ENCODE measurements at regions of chr5 and their contacts with region 1.

Region 1: DNA sequence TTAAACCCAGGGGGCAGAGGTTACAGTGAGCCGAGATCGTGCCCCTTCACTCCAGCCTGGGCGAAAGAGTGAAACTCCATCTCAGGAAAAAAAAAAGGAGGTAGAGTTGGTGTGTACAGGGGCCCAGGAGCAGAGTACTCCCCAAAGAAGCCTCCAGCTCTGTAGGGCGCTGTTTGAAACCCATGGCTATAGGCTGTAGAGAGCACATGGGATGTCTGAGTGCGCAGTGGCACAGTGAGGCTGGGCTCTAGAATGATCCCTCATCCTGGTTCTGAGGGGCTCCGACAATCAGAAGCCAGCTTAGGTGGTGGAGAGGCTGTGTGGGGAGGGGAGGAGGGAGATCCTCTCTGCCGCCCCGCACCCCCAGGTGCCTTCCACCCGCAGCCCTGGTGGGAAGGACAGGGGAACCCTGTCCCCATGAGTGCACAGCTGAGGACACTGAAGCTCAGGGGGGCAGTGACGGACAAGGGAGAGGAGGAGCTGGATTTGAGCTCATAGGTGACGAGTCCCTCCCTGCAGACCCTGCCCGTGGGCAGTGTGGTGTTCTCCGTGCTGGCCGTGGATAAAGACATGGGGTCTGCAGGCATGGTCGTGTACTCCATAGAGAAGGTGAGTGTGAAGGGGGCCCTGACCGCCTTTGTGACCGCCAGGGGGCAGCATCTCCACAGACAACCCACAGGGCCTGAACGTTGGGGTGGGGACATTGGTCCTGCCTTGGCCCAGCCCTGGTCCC is 24.6 kb downstream of the CDHR2 start:
- DNase-seq: peak; percentile 8
- H3K4me3 ChIP-seq: no peak overlapping the region
- H3K27ac ChIP-seq: no peak overlapping the region
- H3K27me3 ChIP-seq: peaks cover 4% of the 10 kb centered on the region
- CTCF ChIP-seq: peak; percentile 82

Region 2: GRCh38 chr5:176415952-176416924 is 157.5 kb before region 1 on chr5 and contains the start of gene CLTB:
- CTCF ChIA-PET with region 1: interaction called, 10 read pairs
- POLR2A ChIA-PET with region 1: no interaction called
- DNase-seq: no peak
- H3K4me3 ChIP-seq: peak within 1 kb of the TSS; percentile 76
- H3K27ac ChIP-seq: peak within 1 kb of the TSS; percentile 39
- H3K27me3 ChIP-seq: no peaks in the 10 kb centered on the region
- CTCF ChIP-seq: peak; percentile 43
- polyA plus RNA-seq, gene CLTB: 66.2 and 67.3 TPM in 2 replicates

Region 3: GRCh38 chr5:176587398-176587797 is 13.7 kb after region 1 on chr5:
- CTCF ChIA-PET with region 1: interaction called, 21 read pairs
- POLR2A ChIA-PET with region 1: no interaction called
- DNase-seq: no peak
- H3K4me3 ChIP-seq: no peak overlapping the region
- H3K27ac ChIP-seq: no peak overlapping the region
- H3K27me3 ChIP-seq: no peaks in the 10 kb centered on the region
- CTCF ChIP-seq: no peak

Region 4: DNA sequence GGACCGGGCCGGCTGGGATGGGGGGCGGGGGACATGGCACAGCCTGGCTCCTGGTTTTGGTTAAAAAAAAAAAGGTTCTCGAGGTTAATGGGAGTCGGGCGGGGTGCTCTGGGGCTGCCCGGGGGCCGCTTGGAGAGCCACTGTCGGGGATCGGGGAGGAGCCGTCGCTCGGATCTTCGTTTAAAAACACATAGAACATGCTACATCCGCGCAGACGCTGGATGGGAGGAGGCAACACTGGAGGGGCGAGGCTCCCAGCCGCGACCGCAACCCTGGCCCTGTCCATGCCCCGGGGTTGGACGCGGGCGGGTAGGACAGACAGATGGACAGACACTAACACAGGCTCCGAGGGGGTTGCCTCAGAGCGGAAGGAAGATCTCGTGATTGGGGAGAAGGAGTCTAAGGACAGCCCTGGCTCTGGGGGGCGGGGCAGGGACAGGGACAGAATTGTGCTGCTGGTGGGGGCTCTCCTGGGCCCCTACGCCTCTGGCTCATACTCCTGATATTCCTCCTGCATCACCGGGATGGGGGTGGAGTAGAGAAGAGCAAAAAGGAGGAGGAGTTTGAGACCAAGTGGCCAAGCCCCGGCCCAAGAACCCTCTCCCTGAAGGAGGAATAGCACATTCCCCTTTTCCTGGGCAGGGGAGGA is 46.7 kb after region 1 on chr5:
- CTCF ChIA-PET with region 1: interaction called, 20 read pairs
- POLR2A ChIA-PET with region 1: interaction called, 3 read pairs
- DNase-seq: no peak
- H3K4me3 ChIP-seq: peak overlapping the region; percentile 25; the same call in 1 of the 2 replicates
- H3K27ac ChIP-seq: no peak overlapping the region
- H3K27me3 ChIP-seq: peaks cover 40% of the 10 kb centered on the region
- CTCF ChIP-seq: no peak

Region 5: DNA sequence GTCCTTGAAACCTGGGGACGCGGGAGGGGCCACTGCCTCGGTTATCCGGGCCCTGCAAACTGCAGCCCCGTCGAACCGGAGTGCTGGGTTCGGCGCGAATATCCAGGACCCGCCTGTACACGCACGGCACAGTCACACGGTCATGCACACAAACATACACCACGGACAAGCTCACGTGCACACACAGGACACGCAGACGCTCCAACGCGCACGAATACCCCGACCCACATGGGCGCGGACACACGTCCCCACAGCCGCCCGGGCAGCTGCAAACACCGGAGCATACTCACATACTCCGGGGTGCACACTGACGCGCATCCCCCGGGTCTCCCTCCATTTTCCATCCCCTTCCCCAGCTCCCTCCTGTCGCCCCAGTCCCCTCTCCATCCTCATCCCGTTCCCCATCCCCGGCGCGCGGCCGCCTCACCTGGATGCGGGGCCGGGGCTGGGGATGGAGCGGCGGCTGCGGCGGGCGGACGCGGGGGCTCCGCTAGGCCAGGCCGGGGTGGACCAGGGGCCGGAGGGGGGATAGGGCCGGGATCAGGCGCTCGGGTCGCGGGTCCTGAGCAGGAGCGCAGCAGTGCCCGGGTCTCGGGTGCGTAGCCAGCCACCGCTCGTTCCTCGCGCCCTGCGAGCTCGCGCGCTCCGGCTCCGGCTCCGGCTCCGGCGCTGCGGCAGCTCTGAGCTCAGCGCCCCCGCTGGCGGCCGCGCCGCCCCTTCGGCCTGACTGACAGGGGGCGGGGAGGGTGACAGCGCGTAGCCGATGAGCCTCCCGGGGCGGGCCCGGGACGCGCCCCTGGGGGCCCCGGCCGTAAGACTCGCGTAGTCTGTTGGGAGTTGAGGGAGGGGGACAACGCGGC is 56.4 kb after region 1 on chr5 and contains the starts of genes EIF4E1B and SNCB:
- CTCF ChIA-PET with region 1: interaction called, 10 read pairs
- POLR2A ChIA-PET with region 1: no interaction called
- DNase-seq: no peak
- H3K4me3 ChIP-seq: peak within 1 kb of the TSS; percentile 56
- H3K27ac ChIP-seq: no peak within 1 kb of the TSS
- H3K27me3 ChIP-seq: peaks cover 64% of the 10 kb centered on the region
- CTCF ChIP-seq: no peak
- polyA plus RNA-seq, gene EIF4E1B: not detected in 2 replicates
- polyA plus RNA-seq, gene SNCB: 0.17 and 0.20 TPM in 2 replicates

Region 6: GRCh38 chr5:176647030-176647866 is 73.5 kb after region 1 on chr5 and contains the start of gene TSPAN17:
- CTCF ChIA-PET with region 1: interaction called, 28 read pairs
- POLR2A ChIA-PET with region 1: no interaction called
- DNase-seq: peak; percentile 96
- H3K4me3 ChIP-seq: peak within 1 kb of the TSS; percentile 86
- H3K27ac ChIP-seq: peak within 1 kb of the TSS; percentile 31
- H3K27me3 ChIP-seq: no peaks in the 10 kb centered on the region
- CTCF ChIP-seq: peak; percentile 38
- polyA plus RNA-seq, gene TSPAN17: 40.9 and 44.3 TPM in 2 replicates

Region 7: GRCh38 chr5:176985516-176985915 is 411.8 kb after region 1 on chr5:
- CTCF ChIA-PET with region 1: no interaction called
- POLR2A ChIA-PET with region 1: no interaction called
- DNase-seq: no peak
- H3K4me3 ChIP-seq: no peak overlapping the region
- H3K27ac ChIP-seq: no peak overlapping the region
- H3K27me3 ChIP-seq: no peaks in the 10 kb centered on the region
- CTCF ChIP-seq: no peak